ENCODE measurements at regions of chr6 and their contacts with region 1.

Region 1: DNA sequence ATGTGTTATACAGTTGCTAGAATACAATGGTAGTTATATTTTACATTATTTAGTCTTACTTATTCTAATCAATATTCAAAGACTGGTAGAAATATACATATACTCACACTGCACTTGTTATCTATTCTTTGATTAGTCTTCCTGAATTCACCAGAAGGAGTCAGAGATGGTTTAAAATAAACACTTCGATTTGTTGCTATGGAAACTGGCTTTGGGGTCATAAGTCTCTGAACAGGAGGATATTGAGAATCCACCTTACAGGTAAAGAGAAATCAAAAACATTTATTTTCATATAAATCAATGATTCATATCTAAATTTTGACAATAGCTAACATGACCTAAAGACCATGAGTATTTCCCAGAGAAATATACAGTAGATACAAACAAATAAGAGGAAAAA is 41.6 kb downstream of the NUP153 start:
- DNase-seq: peak in 1 of 2 donors; percentile 44
- ATAC-seq: no peak
- H3K4me3 ChIP-seq: no peak overlapping the region
- H3K4me3 Mint-ChIP-seq: peak overlapping the region; percentile 63
- H3K27ac ChIP-seq: peak overlapping the region; percentile 81
- H3K27ac Mint-ChIP-seq: peak overlapping the region; percentile 76 to 93
- H3K4me1 ChIP-seq: peaks cover 16% of the 10 kb centered on the region
- H3K4me1 Mint-ChIP-seq: peaks cover 36 to 46% of the 10 kb centered on the region in 2 donors
- H3K27me3 ChIP-seq: no peaks in the 10 kb centered on the region
- H3K27me3 Mint-ChIP-seq: no peaks in the 10 kb centered on the region
- CTCF ChIP-seq: no peak

Region 2: DNA sequence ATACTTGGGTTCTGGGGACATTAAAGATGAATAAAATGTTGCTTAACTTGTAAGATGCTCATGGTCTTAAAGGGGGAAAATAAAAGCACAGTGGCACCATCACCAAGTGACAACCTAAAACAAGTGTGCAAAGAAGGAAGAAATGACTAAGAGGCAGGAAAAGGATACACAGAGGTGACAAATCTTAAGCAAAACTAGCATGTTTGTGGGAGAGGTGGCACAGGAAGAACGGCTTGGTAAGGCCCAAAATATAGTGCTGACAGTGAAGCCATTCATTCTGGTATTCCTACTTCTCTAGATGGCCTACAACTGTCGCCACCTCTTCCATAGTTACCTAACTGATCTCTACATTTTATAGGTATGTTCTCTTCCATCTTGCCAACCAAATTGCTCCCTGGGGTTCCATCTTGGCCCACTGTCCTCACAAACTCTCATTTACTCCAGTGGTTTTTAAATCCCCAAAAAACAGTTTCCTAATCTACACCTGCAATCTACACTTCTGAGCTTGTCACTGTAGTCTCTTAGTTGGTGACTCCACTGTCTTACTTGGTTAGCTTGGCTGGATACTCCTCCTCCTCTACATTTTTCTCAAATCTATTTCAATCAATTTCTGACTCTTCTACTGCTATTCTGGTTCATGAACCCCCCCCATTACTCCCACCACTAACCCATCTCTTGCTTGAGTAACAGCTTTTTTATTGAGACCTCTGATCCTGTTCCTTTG is 31.5 kb before region 1 on chr6:
- intact Hi-C with region 1: loop called (anchors 2 kb)
- DNase-seq: peak; percentile 24 to 63
- ATAC-seq: peak; percentile 86 to 91 (median 88)
- H3K4me3 ChIP-seq: no peak overlapping the region
- H3K4me3 Mint-ChIP-seq: peak overlapping the region; percentile 72
- H3K27ac ChIP-seq: peak overlapping the region; percentile 58
- H3K27ac Mint-ChIP-seq: peak overlapping the region; percentile 74 to 86
- H3K4me1 ChIP-seq: peaks cover 31% of the 10 kb centered on the region
- H3K4me1 Mint-ChIP-seq: peaks cover 56 to 57% of the 10 kb centered on the region in 2 donors
- H3K27me3 ChIP-seq: no peaks in the 10 kb centered on the region
- H3K27me3 Mint-ChIP-seq: no peaks in the 10 kb centered on the region
- CTCF ChIP-seq: no peak

Region 3: DNA sequence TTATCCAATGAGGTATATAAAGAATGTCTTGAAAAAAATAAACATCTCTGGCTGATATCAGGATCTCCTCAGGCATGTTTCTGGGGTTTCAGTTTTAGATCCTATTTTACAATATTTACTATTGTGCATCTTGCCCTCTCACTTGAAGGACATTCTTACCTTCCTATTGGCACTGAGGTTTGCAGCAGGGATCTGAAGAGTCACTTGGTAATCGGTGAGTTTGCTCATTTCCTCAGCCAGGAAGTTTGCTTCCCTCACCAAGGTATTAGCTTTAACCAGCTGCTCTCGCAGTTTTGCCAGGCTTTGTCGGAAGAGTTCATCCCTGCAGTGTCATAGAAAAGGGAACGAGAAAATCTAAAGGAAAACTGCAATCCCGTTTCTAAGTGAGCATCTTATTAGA is 143.5 kb after region 1 on chr6:
- intact Hi-C with region 1: no loop called
- DNase-seq: no peak
- ATAC-seq: no peak
- H3K4me3 ChIP-seq: no peak overlapping the region
- H3K4me3 Mint-ChIP-seq: no peak overlapping the region
- H3K27ac ChIP-seq: no peak overlapping the region
- H3K27ac Mint-ChIP-seq: no peak overlapping the region
- H3K4me1 ChIP-seq: no peaks in the 10 kb centered on the region
- H3K4me1 Mint-ChIP-seq: peaks cover 4 to 6% of the 10 kb centered on the region in 2 donors
- H3K27me3 ChIP-seq: no peaks in the 10 kb centered on the region
- H3K27me3 Mint-ChIP-seq: no peaks in the 10 kb centered on the region
- CTCF ChIP-seq: no peak

Measured in natural killer cell (primary cell).